ENCODE measurements at regions of chr7 and their contacts with region 1.

Region 1: DNA sequence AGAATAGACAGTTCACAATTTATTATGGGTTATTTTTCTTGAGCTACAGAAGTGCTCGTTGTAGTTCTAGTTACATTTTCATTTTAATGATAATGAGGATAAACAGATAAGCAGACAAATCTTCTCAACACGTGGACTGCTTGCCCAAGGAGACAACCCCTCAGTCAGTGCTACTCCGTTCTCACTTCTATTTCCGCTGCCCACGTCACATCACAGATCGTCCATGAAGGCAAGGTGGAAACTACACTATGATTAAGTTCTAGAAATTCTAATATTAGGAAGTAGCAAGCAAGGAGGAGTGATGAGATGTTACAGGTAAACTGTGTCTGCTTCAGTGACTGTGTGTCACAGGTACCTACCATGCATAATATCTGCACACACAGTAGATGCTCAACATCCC is 210.5 kb downstream of the CHCHD3 start:
- DNase-seq: no peak
- ATAC-seq: no peak
- H3K4me3 ChIP-seq: no peak overlapping the region
- H3K27ac ChIP-seq: no peak overlapping the region
- H3K4me1 ChIP-seq: no peaks in the 10 kb centered on the region
- H3K27me3 ChIP-seq: no peaks in the 10 kb centered on the region
- CTCF ChIP-seq: no peak

Region 2: DNA sequence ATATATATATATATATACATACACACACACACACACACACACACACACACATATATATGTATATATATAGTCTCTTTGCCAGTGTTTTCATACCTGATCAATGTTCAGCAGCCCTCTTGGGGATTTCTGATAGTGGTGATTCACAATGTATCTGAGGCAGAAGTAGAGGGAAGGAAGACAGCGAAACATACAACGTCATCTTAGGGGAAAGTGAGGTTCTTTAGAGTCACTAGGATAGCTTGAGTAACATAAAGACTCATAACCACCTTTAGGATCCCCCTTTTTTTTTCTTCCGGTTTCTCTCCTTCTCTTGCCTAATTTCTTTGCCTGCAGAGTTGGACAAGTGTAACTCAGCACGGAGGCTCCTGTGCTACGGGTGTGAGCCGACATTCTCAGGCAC is 1371.6 kb before region 1 on chr7:
- CTCF ChIA-PET with region 1: no interaction called
- POLR2A ChIA-PET with region 1: interaction called, 10 read pairs
- in situ Hi-C with region 1: no loop called
- intact Hi-C with region 1: no loop called
- DNase-seq: no peak
- ATAC-seq: no peak
- H3K4me3 ChIP-seq: no peak overlapping the region
- H3K27ac ChIP-seq: no peak overlapping the region
- H3K4me1 ChIP-seq: no peaks in the 10 kb centered on the region; the same call in 1 of the 2 replicates
- H3K27me3 ChIP-seq: no peaks in the 10 kb centered on the region
- CTCF ChIP-seq: no peak

Measured in Panc1 (cell line).